ENCODE measurements at regions of chr10 and their contacts with region 1.

Region 1: GRCh38 chr10:70513848-70514309 is 35.3 kb downstream of the PALD1 start:
- DNase-seq: peak; percentile 51
- ATAC-seq: peak; percentile 99
- H3K4me3 ChIP-seq: no peak overlapping the region
- H3K27ac ChIP-seq: no peak overlapping the region
- H3K4me1 ChIP-seq: peaks cover 18% of the 10 kb centered on the region
- H3K27me3 ChIP-seq: no peaks in the 10 kb centered on the region
- CTCF ChIP-seq: no peak
- EP300 ChIP-seq: no peak
- POLR2A ChIP-seq: no peak
- RAD21 ChIP-seq: no peak

Region 2: DNA sequence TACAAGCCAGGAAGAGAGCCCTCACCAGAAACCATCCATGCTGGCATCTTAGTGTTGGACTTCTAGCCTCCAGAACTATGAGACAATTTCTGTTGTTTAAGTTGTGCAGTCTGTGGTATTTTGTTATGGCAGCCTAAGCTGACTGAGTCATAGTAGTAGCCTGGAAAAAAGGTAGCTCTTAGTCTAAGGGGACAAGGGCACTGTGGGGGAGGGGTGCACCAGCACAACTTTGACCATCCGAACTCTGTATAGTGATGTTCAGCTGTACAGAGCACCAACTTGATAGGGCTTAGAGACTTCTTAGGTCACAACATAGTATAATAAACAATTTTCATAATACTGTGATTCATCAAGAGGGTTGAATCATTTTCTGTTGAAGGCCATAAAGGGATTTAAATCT is 95.7 kb before region 1 on chr10:
- CTCF ChIA-PET with region 1: no interaction called
- POLR2A ChIA-PET with region 1: no interaction called
- RAD21 ChIA-PET with region 1: no interaction called
- SMC1A ChIA-PET with region 1: no interaction called
- in situ Hi-C with region 1: no loop called
- intact Hi-C with region 1: no loop called
- DNase-seq: no peak
- ATAC-seq: no peak; the same call in 2 of the 3 replicates
- H3K4me3 ChIP-seq: no peak overlapping the region
- H3K27ac ChIP-seq: no peak overlapping the region
- H3K4me1 ChIP-seq: peaks cover 17% of the 10 kb centered on the region
- H3K27me3 ChIP-seq: no peaks in the 10 kb centered on the region
- CTCF ChIP-seq: no peak
- EP300 ChIP-seq: no peak
- POLR2A ChIP-seq: no peak
- RAD21 ChIP-seq: no peak

Region 3: GRCh38 chr10:70478191-70479164 is 35.4 kb before region 1 on chr10 and contains the start of gene PALD1:
- CTCF ChIA-PET with region 1: interaction called, 4 read pairs
- POLR2A ChIA-PET with region 1: interaction called, 3 read pairs
- RAD21 ChIA-PET with region 1: interaction called, 10 read pairs
- SMC1A ChIA-PET with region 1: interaction called, 11 read pairs
- in situ Hi-C with region 1: no loop called
- intact Hi-C with region 1: no loop called
- DNase-seq: no peak
- ATAC-seq: peak; percentile 63
- H3K4me3 ChIP-seq: peak within 1 kb of the TSS; percentile 78
- H3K27ac ChIP-seq: peak within 1 kb of the TSS; percentile 64
- H3K4me1 ChIP-seq: peaks cover 50% of the 10 kb centered on the region
- H3K27me3 ChIP-seq: no peaks in the 10 kb centered on the region
- CTCF ChIP-seq: no peak
- EP300 ChIP-seq: no peak
- POLR2A ChIP-seq: peak; percentile 67
- RAD21 ChIP-seq: no peak
- polyA plus RNA-seq, gene PALD1: 0.43 to 1.2 TPM

Region 4: DNA sequence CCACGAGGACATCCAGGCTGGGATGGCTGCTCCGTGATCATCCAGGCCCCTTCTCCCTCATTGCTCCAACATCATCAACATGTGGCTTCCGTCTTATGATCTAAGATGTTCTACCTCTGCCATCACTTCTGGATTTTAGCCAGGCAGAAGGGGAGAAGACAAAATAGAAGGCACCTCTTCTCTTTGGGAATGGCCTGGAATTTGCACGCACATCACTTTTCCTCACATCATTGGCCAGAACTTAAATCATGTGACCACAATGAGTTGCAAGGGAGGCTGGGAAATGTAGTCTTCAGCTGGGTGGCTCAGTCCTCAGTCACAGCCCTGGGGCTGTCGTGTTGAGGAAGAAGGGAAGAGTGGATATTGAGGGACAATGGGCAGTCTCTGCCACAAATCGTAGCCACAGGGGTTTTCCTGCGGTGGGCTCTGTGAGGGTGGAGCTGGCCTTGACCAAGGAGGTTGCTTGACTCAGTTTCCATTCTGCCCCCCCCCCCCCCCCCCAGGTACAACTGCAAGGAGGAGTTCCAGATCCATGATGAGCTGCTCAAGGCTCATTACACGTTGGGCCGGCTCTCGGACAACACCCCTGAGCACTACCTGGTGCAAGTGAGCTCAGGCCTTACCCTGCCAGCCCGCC is 15.0 kb after region 1 on chr10:
- CTCF ChIA-PET with region 1: no interaction called
- POLR2A ChIA-PET with region 1: no interaction called
- RAD21 ChIA-PET with region 1: no interaction called
- SMC1A ChIA-PET with region 1: no interaction called
- in situ Hi-C with region 1: no loop called
- intact Hi-C with region 1: no loop called
- DNase-seq: no peak
- ATAC-seq: peak; percentile 85
- H3K4me3 ChIP-seq: no peak overlapping the region
- H3K27ac ChIP-seq: no peak overlapping the region
- H3K4me1 ChIP-seq: no peaks in the 10 kb centered on the region
- H3K27me3 ChIP-seq: no peaks in the 10 kb centered on the region
- CTCF ChIP-seq: no peak
- EP300 ChIP-seq: no peak
- POLR2A ChIP-seq: no peak
- RAD21 ChIP-seq: no peak

Measured in GM12878 (cell line).